ENCODE measurements at regions of chr6 and their contacts with region 1.

Region 1: DNA sequence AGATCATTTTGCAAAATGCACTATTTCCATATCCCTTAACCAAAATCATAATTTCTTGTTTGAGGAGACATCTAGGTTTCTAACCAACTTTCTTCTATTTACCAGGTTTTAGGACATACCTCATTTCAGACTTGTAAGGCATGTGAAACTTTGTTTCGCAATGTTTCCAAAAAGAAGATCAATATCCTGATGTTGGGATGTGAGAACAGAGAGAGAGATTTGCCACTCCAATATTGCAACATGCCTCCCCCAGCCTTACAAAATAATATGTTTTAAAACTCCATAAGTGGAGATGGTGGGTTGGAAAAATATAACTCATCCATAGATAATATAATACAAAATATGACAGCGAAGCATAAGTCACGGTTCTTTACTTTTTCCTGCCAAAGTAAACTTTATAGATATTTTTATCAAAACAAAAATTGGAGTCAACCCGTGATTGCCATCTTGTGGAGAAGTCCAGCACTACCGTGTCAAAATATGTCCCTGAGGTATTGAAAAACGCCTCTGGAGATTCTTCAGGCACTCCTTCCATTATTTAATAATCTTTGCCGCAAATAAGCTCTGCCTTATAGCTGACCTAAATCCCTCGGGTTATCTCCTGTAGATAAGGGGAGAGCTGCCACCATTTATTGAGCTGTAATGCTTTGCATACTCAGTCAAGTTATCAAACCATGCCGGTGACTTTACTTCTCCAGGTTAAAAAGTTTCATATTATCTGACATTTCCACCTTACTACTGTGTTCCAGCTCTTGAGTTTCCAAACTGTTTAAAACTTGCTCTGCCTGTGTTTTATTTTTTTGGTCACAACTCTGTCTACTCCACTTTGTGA is 534.2 kb downstream of the HACE1 start:
- DNase-seq: peak; percentile 18 to 50
- H3K4me3 ChIP-seq: peak overlapping the region; percentile 10; the same call in 1 of the 2 replicates
- H3K27ac ChIP-seq: peak overlapping the region; percentile 72
- H3K4me1 ChIP-seq: peaks cover 27% of the 10 kb centered on the region
- H3K27me3 ChIP-seq: no peaks in the 10 kb centered on the region
- CTCF ChIP-seq: peak; percentile 89

Region 2: GRCh38 chr6:104170401-104170800 is 155.2 kb before region 1 on chr6:
- CTCF ChIA-PET with region 1: no interaction called
- POLR2A ChIA-PET with region 1: no interaction called
- intact Hi-C with region 1: no loop called
- DNase-seq: no peak
- H3K4me3 ChIP-seq: no peak overlapping the region
- H3K27ac ChIP-seq: no peak overlapping the region
- H3K4me1 ChIP-seq: no peaks in the 10 kb centered on the region
- H3K27me3 ChIP-seq: no peaks in the 10 kb centered on the region
- CTCF ChIP-seq: no peak

Region 3: GRCh38 chr6:104483225-104483834 is 157.8 kb after region 1 on chr6:
- CTCF ChIA-PET with region 1: no interaction called
- POLR2A ChIA-PET with region 1: no interaction called
- intact Hi-C with region 1: loop called (anchors 5 kb)
- DNase-seq: no peak
- H3K4me3 ChIP-seq: no peak overlapping the region
- H3K27ac ChIP-seq: no peak overlapping the region
- H3K4me1 ChIP-seq: peaks cover 5% of the 10 kb centered on the region
- H3K27me3 ChIP-seq: no peaks in the 10 kb centered on the region
- CTCF ChIP-seq: peak; percentile 71

Region 4: GRCh38 chr6:104525677-104526312 is 200.2 kb after region 1 on chr6:
- CTCF ChIA-PET with region 1: no interaction called
- POLR2A ChIA-PET with region 1: no interaction called
- intact Hi-C with region 1: loop called (anchors 5 kb)
- DNase-seq: peak; percentile 58 to 62
- H3K4me3 ChIP-seq: no peak overlapping the region
- H3K27ac ChIP-seq: no peak overlapping the region
- H3K4me1 ChIP-seq: no peaks in the 10 kb centered on the region
- H3K27me3 ChIP-seq: no peaks in the 10 kb centered on the region
- CTCF ChIP-seq: peak; percentile 99

Region 5: GRCh38 chr6:104537180-104537579 is 211.6 kb after region 1 on chr6:
- CTCF ChIA-PET with region 1: no interaction called
- POLR2A ChIA-PET with region 1: no interaction called
- intact Hi-C with region 1: no loop called
- DNase-seq: no peak
- H3K4me3 ChIP-seq: no peak overlapping the region
- H3K27ac ChIP-seq: no peak overlapping the region
- H3K4me1 ChIP-seq: no peaks in the 10 kb centered on the region
- H3K27me3 ChIP-seq: no peaks in the 10 kb centered on the region
- CTCF ChIP-seq: no peak

Region 6: DNA sequence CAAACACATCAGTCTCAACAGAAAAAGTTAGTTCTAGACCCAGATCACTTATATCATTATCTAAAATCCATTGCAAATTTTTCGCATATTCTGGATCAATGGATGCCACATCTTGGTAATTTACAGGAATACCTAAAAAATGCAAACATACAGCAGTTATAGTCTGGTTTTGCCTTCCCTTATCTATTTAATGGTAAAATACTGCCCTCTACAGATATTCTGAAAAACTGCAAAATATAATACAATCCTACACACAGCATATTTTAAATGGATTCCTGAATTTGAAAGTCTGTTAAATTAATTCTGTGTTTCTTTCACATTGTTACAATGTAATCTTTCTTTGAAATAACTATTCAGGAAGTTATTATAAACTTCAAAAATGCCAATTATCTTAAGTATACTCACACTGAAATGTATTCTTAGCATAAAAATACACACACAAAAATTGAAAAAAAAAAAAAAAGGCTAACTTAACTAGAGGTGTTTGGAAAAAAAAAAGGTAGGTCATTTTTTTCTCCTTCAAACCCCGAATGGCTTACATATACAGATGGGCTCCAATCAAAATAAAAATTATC is 445.8 kb after region 1 on chr6:
- CTCF ChIA-PET with region 1: no interaction called
- POLR2A ChIA-PET with region 1: no interaction called
- intact Hi-C with region 1: loop called (anchors 5 kb)
- DNase-seq: no peak
- H3K4me3 ChIP-seq: no peak overlapping the region
- H3K27ac ChIP-seq: no peak overlapping the region
- H3K4me1 ChIP-seq: no peaks in the 10 kb centered on the region
- H3K27me3 ChIP-seq: no peaks in the 10 kb centered on the region
- CTCF ChIP-seq: peak; percentile 85

Region 7: GRCh38 chr6:105648276-105648675 is 1322.7 kb after region 1 on chr6:
- CTCF ChIA-PET with region 1: no interaction called
- POLR2A ChIA-PET with region 1: no interaction called
- intact Hi-C with region 1: no loop called
- DNase-seq: peak in 1 of 2 experiments; percentile 23
- H3K4me3 ChIP-seq: no peak overlapping the region
- H3K27ac ChIP-seq: no peak overlapping the region
- H3K4me1 ChIP-seq: no peaks in the 10 kb centered on the region
- H3K27me3 ChIP-seq: no peaks in the 10 kb centered on the region
- CTCF ChIP-seq: no peak

Measured in PC-9 (cell line).